Naive thymus-derived CD8-positive, alpha-beta T cell (primary cell): ENCODE measurements at regions of chr14 and their contacts with region 1.

Region 1: GRCh38 chr14:54881235-54881760 is 21.3 kb downstream of the GCH1 start:
- DNase-seq: peak in 5 of 10 donors; percentile 16 to 70 (median 49)
- ATAC-seq: peak; percentile 79 to 85
- H3K4me3 Mint-ChIP-seq: peak overlapping the region; percentile 82 to 96 (median 92)
- H3K27ac Mint-ChIP-seq: peak overlapping the region; percentile 90 to 99 (median 96)
- H3K4me1 Mint-ChIP-seq: peaks cover 7 to 54% (median 49%) of the 10 kb centered on the region in 4 donors
- H3K27me3 Mint-ChIP-seq: no peaks in the 10 kb centered on the region

Region 2: DNA sequence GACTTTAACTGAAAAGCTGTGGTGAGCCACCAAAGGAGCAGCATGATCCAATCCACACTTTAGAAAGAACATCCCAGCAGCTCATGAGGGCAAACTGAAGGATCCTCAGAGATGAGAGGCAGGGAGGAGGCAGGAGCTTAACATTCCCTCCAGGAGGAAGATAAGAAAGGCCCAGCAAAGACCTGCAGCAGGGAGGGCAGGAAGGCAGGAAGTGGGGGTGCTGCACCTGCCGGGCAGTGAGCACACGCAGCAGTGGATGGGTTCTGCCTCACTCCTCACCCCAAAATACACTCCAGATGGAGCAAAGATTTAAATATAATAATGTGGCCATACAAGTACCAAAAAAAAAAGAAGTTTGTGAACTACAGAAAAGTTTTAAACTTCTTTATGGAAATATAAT is 27.1 kb before region 1 on chr14:
- POLR2A ChIA-PET with region 1: no interaction called
- DNase-seq: peak in 1 of 10 donors; percentile 2
- ATAC-seq: peak in 1 of 2 donors; percentile 58
- H3K4me3 Mint-ChIP-seq: peak overlapping the region in 3 of 10 donors; percentile 23 to 42 (median 42)
- H3K27ac Mint-ChIP-seq: peak overlapping the region in 8 of 10 donors; percentile 20 to 65 (median 38)
- H3K4me1 Mint-ChIP-seq: peaks cover 9 to 41% (median 15%) of the 10 kb centered on the region in 4 donors
- H3K27me3 Mint-ChIP-seq: no peaks in the 10 kb centered on the region

Region 3: GRCh38 chr14:54866588-54866987 is 14.7 kb before region 1 on chr14:
- POLR2A ChIA-PET with region 1: interaction called, 11 read pairs
- DNase-seq: no peak
- ATAC-seq: no peak
- H3K4me3 Mint-ChIP-seq: no peak overlapping the region
- H3K27ac Mint-ChIP-seq: peak overlapping the region in 3 of 10 donors; percentile 0 to 49 (median 9)
- H3K4me1 Mint-ChIP-seq: peaks cover 10 to 47% (median 33%) of the 10 kb centered on the region in 4 donors
- H3K27me3 Mint-ChIP-seq: no peaks in the 10 kb centered on the region

Region 4: GRCh38 chr14:54902521-54903420 is 21.5 kb after region 1 on chr14 and contains the start of gene GCH1:
- POLR2A ChIA-PET with region 1: interaction called, 18 read pairs
- DNase-seq: peak; percentile 55 to 85 (median 76)
- ATAC-seq: peak; percentile 78 to 80
- H3K4me3 Mint-ChIP-seq: peak within 1 kb of the TSS; percentile 81 to 93 (median 91)
- H3K27ac Mint-ChIP-seq: peak within 1 kb of the TSS; percentile 34 to 97 (median 92)
- H3K4me1 Mint-ChIP-seq: peaks cover 6 to 31% (median 21%) of the 10 kb centered on the region in 4 donors
- H3K27me3 Mint-ChIP-seq: no peaks in the 10 kb centered on the region
- polyA plus RNA-seq, gene GCH1: 23.0 to 29.4 (median 24.3) TPM

Region 5: DNA sequence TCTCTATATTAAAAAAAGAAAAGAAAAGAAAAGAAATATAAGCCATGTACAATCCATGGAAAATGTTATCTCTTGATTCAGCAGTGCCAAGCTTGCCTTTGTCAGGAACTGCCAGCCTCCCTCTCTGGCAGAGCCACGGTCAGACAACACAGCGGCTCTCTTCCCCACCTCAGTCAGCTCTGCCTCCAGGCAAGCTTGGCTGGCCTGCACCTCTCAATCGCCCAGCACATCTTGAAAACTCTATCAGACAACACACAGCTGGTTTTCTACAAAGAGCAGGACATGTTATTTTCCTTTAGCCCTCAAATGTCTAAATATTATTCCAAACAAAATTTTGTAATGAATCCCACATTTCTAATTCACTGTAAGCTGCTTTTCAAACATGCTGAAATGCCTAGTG is 41.3 kb after region 1 on chr14:
- POLR2A ChIA-PET with region 1: no interaction called
- DNase-seq: no peak
- ATAC-seq: no peak
- H3K4me3 Mint-ChIP-seq: no peak overlapping the region
- H3K27ac Mint-ChIP-seq: peak overlapping the region in 1 of 10 donors; percentile 41
- H3K4me1 Mint-ChIP-seq: no peaks in the 10 kb centered on the region
- H3K27me3 Mint-ChIP-seq: peaks cover 0 to 13% (median 8%) of the 10 kb centered on the region in 5 donors